Sciatic nerve (tissue), 2 donors: ENCODE measurements at regions of chr11 and their contacts with region 1.

Region 1: DNA sequence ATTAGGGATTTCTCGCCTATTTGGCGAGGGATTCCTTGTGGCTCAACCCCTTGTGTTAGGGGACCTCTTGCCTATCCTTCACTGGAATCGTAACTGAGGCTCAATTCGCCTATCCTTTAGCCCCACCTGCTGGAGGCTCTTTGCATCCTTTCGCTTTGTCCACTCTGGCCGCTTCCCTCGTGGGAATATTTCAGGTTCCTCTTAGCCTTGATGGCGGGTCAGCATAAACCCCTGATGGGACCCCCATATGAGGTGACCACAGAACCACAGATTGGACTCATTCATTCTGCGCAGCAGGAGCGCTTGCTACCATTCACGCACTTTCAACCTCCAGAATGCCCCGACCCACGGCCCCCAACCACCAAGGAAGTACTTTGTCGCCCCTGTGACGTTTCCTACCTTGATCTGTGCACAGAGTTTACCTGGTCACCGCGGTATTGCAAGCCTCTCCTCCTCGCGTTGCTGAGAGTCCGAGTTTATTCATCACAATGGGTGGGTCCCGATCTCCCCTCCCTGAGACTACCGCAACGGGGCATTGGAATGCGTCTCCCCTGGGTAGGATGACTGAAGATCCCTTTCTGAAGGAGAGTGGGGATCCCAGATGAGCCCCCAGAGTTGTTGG is at the start of gene OR52N2:
- DNase-seq: peak; percentile 86
- ATAC-seq: peak; percentile 96
- total RNA-seq, gene OR52N2: not detected

Region 2: GRCh38 chr11:5476184-5476819 is 332.3 kb before region 1 on chr11:
- intact Hi-C with region 1: loop called (anchors 10 kb)
- DNase-seq: no peak
- ATAC-seq: peak; percentile 49

Region 3: GRCh38 chr11:5596607-5597201 is 211.9 kb before region 1 on chr11 and contains the start of gene TRIM6:
- intact Hi-C with region 1: loop called (anchors 10 kb)
- DNase-seq: peak; percentile 70
- ATAC-seq: peak; percentile 84
- total RNA-seq, gene TRIM6: 3.3 TPM

Region 4: DNA sequence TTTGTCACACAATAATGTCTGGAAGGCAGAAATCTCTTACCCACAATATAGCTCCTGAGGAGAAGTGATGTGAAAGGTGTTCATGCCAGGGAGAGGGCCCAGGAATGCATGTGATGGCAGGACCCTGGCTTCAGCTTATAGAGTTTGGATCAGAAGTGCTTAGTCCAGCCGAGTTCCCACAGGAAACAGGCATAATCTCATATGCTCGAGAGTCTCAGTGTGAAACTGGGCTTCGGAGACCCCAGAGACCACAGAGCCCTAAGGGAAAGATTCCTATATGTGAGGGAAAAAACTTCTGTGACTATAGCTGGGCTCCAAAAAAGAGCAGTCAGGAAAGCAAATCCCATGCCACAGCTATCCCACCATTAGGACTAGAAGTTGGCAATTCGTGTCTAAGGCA is 25.4 kb before region 1 on chr11 and contains the start of gene OR52N5:
- intact Hi-C with region 1: no loop called
- DNase-seq: no peak
- ATAC-seq: no peak
- total RNA-seq, gene OR52N5: not detected

Region 5: DNA sequence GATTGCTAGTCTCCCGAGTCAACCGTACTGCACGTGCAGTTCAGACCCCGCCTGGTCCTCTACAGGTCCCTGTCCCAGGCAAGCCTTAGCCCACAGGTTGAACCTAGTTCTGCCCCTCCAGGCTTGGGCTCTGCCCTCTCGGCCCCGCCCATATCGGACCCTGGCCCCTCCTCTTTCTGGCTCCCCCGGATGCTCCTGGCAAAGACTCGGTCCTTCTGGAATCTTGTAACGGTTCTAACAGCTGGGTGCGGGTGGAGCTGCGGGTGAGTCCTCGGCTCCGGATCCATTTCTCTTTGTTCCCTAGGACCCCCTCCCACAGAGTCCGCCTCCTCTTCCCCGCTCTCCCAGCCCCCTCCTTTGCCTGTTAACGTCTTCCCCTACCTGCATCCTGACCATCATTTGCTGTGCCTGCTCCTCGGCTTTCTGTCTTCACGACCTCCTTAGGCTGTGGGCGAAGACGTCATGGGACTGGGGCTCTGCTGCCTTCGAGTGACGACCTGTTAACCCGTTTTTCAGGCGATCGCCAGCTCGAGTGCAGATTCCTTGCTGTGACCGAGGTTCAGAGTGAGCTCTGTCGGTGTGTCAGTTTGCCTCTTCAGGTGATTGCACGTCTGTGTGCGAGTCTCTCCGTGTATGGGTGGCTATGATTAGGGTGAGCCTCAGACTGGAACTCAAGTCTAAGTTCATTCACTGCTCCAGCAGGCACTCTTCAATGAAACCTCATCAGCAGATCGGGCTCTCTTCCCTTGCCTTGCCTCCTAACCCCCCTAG is 688.6 kb after region 1 on chr11 and contains the start of gene DNHD1:
- intact Hi-C with region 1: no loop called
- DNase-seq: no peak
- ATAC-seq: peak; percentile 53
- total RNA-seq, gene DNHD1: 33.1 TPM